HCT116 (cell line): ENCODE measurements at regions of chr12 and their contacts with region 1.

Region 1: DNA sequence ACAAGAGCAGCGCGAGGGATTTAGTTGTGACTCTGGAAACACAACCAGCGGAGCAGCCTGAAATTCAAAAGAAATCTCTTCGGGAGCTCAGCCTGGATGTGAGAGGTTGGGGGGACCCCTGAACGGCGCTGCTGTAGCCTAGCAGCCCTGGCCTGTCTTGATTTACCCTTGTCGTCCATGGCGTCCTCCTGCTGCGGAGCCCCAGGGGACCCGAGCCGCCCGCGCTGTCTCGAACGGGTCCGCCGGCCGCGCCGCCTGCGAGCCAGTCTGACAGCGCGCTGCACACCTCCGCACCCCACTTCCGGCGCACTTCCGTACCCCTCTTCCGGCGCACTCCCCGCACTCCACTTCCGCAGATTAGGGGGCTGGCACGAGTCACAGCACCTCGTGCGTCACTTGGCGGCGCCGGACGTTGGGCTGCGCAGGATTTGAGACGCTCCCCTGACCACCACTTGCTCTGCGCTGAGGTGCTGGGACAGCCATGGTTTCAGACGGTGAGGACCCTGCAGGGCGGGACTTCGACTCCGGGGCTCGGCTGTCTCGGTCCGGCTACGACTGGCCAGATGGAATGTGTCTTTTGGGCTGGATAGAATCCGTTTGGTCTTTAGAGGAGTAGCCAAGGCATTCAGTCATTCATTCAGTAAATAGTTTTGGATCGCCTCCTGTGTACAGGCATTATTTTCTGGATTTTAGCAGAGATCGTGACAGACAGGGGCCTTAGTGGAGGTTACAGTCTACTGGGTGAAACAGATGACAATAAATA is at the starts of genes EIF2B1 and GTF2H3:
- DNase-seq: peak; percentile 94
- ATAC-seq: peak; percentile 97
- H3K4me3 ChIP-seq: peak within 1 kb of the TSS; percentile 72 to 73
- H3K27ac ChIP-seq: peak within 1 kb of the TSS; percentile 65
- H3K4me1 ChIP-seq: peaks cover 9 to 12% of the 10 kb centered on the region in 2 experiments
- H3K27me3 ChIP-seq: no peaks in the 10 kb centered on the region
- CTCF ChIP-seq: no peak
- POLR2A ChIP-seq: peak; percentile 94
- RAD21 ChIP-seq: no peak
- total RNA-seq, gene EIF2B1: 41.7 TPM
- total RNA-seq, gene GTF2H3: 94.0 TPM

Region 2: GRCh38 chr12:123912415-123913380 is 279.1 kb after region 1 on chr12:
- CTCF ChIA-PET with region 1: no interaction called
- POLR2A ChIA-PET with region 1: no interaction called
- RAD21 ChIA-PET with region 1: no interaction called
- intact Hi-C with region 1: no loop called
- DNase-seq: no peak
- ATAC-seq: no peak
- H3K4me3 ChIP-seq: no peak overlapping the region
- H3K27ac ChIP-seq: no peak overlapping the region
- H3K4me1 ChIP-seq: peaks cover 1 to 14% of the 10 kb centered on the region in 2 experiments; a peak in 3 of 4 replicates
- H3K27me3 ChIP-seq: no peaks in the 10 kb centered on the region
- CTCF ChIP-seq: no peak
- POLR2A ChIP-seq: no peak
- RAD21 ChIP-seq: no peak

Region 3: DNA sequence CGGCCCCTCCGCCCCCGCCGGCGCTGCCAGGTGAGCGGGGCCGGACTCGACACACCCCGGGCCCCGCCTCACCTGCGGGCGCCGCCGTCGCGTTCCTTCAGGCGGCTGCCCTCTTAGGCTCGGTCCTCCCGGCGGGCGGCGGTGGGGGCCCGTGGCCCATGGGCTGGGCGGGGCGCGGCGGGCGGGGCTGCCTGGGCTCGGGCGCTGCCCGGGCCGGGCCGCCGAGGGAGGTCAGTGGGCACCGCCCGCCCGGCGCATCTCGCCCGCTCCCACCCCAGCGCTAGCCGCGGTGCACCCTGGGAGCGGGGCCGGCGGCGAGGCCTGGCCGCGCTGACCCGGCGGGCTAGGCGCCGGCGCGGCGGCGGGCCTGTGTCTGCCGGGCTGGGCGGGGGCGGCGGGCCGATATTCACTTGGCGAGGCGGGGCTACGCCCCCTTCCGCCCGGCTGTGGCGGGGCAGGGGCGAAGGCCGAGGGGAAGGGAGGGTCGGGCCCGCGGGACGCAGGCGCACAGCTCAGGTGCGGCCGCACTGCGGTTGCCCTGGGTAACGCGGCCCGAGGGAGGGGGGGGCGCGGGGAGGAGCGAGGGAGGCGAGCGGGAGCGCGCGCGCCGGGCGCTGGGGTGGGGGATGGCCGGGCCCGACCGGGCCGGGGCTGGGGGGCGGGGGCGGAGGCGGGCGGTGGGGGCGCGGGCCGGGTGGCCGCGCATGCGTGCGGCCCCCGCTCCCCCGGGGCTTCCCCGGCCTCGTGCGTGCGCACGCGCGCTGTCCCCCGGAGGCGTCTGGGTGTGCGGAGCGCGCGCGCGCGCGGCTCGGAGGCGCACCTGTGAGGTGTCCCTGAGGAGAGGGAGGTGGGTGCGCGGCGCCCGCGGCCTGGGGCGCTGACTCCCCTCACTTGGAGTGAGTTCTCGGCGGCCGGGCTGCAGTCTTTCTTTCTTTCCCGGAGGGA is 339.2 kb after region 1 on chr12 and contains the starts of genes CCDC92 and ZNF664:
- CTCF ChIA-PET with region 1: no interaction called
- POLR2A ChIA-PET with region 1: no interaction called
- RAD21 ChIA-PET with region 1: no interaction called
- intact Hi-C with region 1: loop called (anchors 5 kb)
- DNase-seq: peak; percentile 83
- ATAC-seq: peak; percentile 85
- H3K4me3 ChIP-seq: peak within 1 kb of the TSS; percentile 68 to 85
- H3K27ac ChIP-seq: peak within 1 kb of the TSS; percentile 81
- H3K4me1 ChIP-seq: peaks cover 10 to 15% of the 10 kb centered on the region in 2 experiments; a peak in 3 of 4 replicates
- H3K27me3 ChIP-seq: no peaks in the 10 kb centered on the region
- CTCF ChIP-seq: 0 out of 6 replicates have a peak, but pooled peaks of 1 of the 3 experiments have one; percentile 17
- POLR2A ChIP-seq: peak; percentile 72
- RAD21 ChIP-seq: no peak
- total RNA-seq, gene CCDC92: 9.7 TPM
- total RNA-seq, gene ZNF664: 124 TPM